CD8-positive, alpha-beta memory T cell (primary cell): ENCODE measurements at regions of chr7 and their contacts with region 1.

Region 1: DNA sequence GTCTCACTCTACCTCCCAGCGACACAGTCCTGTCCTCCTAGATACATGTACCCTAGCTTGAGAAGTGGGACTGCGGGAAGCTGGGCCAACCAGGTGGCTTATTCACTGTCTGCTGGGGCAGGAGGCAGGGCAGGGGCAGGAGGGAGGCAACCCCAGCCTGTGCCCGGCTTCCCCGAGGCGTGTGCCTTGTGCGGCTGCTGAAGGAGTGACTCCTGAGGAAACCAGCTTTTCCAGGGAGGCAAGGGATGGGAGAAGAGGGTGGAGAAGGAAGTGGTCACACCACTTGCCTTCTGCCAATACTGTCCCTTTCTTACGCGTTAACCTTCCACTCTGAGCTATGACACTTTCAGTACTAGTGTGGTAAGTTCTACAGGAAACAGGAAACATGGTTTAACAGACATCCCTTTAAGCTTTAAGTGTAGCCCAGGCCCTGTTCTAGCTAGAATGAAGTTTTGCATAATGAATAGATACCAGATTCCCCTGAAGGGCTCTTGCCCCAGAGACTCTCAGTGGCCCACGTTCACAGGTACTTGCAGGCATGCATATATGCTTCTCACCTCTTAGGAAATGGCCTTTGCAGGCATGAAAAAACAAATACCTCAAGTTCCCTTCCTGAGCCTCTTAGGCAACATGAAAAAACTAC is 40.6 kb downstream of the SYPL1 start:
- DNase-seq: peak in 3 of 5 donors; percentile 7 to 73 (median 61)
- H3K4me3 ChIP-seq: peak overlapping the region; percentile 53
- H3K4me3 Mint-ChIP-seq: peak overlapping the region; percentile 35 to 83 (median 81)
- H3K27ac ChIP-seq: peak overlapping the region; percentile 52
- H3K27ac Mint-ChIP-seq: peak overlapping the region; percentile 83 to 97 (median 90)
- H3K4me1 ChIP-seq: peaks cover 38% of the 10 kb centered on the region
- H3K4me1 Mint-ChIP-seq: peaks cover 38 to 46% (median 38%) of the 10 kb centered on the region in 3 donors
- H3K27me3 ChIP-seq: no peaks in the 10 kb centered on the region
- H3K27me3 Mint-ChIP-seq: no peaks in the 10 kb centered on the region

Region 2: GRCh38 chr7:105776058-105776751 is 295.3 kb before region 1 on chr7:
- CTCF ChIA-PET with region 1: no interaction called
- POLR2A ChIA-PET with region 1: no interaction called
- DNase-seq: no peak
- H3K4me3 ChIP-seq: no peak overlapping the region
- H3K4me3 Mint-ChIP-seq: no peak overlapping the region
- H3K27ac ChIP-seq: no peak overlapping the region
- H3K27ac Mint-ChIP-seq: no peak overlapping the region
- H3K4me1 ChIP-seq: no peaks in the 10 kb centered on the region
- H3K4me1 Mint-ChIP-seq: peaks cover 0 to 7% (median 2%) of the 10 kb centered on the region in 3 donors
- H3K27me3 ChIP-seq: no peaks in the 10 kb centered on the region
- H3K27me3 Mint-ChIP-seq: peaks cover 0 to 3% of the 10 kb centered on the region in 2 donors

Region 3: DNA sequence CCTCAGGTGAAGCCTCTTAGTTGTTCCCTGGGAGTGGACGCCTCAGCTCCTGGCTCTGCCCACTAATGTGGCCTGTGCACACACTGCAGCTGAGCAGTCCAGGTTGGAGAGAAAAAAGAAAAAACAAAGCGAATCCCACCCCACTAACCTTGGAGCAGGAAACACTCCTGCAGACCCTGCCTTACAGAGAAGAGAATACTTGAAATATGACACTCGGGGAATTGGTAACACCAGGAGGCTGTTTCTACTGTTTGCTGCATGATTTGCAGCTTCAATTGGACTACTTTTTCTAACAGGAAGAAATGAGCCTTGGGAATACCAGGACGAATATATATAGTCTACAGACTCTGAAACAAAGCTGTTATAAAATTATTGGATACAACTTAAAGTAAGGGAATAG is 86.2 kb before region 1 on chr7:
- CTCF ChIA-PET with region 1: no interaction called
- POLR2A ChIA-PET with region 1: no interaction called
- DNase-seq: no peak
- H3K4me3 ChIP-seq: no peak overlapping the region
- H3K4me3 Mint-ChIP-seq: no peak overlapping the region
- H3K27ac ChIP-seq: no peak overlapping the region
- H3K27ac Mint-ChIP-seq: no peak overlapping the region
- H3K4me1 ChIP-seq: no peaks in the 10 kb centered on the region
- H3K4me1 Mint-ChIP-seq: no peaks in the 10 kb centered on the region
- H3K27me3 ChIP-seq: no peaks in the 10 kb centered on the region
- H3K27me3 Mint-ChIP-seq: peaks cover 6 to 16% of the 10 kb centered on the region in 2 donors

Region 4: GRCh38 chr7:106056513-106057203 is 14.8 kb before region 1 on chr7:
- CTCF ChIA-PET with region 1: interaction called, 16 read pairs
- POLR2A ChIA-PET with region 1: interaction called, 5 read pairs
- DNase-seq: peak; percentile 49 to 79 (median 59)
- H3K4me3 ChIP-seq: no peak overlapping the region
- H3K4me3 Mint-ChIP-seq: peak overlapping the region in 1 of 7 donors; percentile 24
- H3K27ac ChIP-seq: no peak overlapping the region
- H3K27ac Mint-ChIP-seq: peak overlapping the region in 1 of 8 donors; percentile 31
- H3K4me1 ChIP-seq: peaks cover 14% of the 10 kb centered on the region
- H3K4me1 Mint-ChIP-seq: peaks cover 18 to 22% (median 21%) of the 10 kb centered on the region in 3 donors
- H3K27me3 ChIP-seq: no peaks in the 10 kb centered on the region
- H3K27me3 Mint-ChIP-seq: no peaks in the 10 kb centered on the region

Region 5: GRCh38 chr7:106112117-106112971 is 40.9 kb after region 1 on chr7 and contains the start of gene SYPL1:
- CTCF ChIA-PET with region 1: no interaction called
- POLR2A ChIA-PET with region 1: interaction called, 28 read pairs
- DNase-seq: peak; percentile 91 to 96 (median 92)
- H3K4me3 ChIP-seq: peak within 1 kb of the TSS; percentile 71
- H3K4me3 Mint-ChIP-seq: peak within 1 kb of the TSS; percentile 78 to 92 (median 90)
- H3K27ac ChIP-seq: peak within 1 kb of the TSS; percentile 87
- H3K27ac Mint-ChIP-seq: peak within 1 kb of the TSS; percentile 88 to 97 (median 95)
- H3K4me1 ChIP-seq: peaks cover 73% of the 10 kb centered on the region
- H3K4me1 Mint-ChIP-seq: peaks cover 53 to 73% (median 62%) of the 10 kb centered on the region in 3 donors
- H3K27me3 ChIP-seq: no peaks in the 10 kb centered on the region
- H3K27me3 Mint-ChIP-seq: no peaks in the 10 kb centered on the region
- total RNA-seq, gene SYPL1: 33.1 to 33.7 TPM

Region 6: DNA sequence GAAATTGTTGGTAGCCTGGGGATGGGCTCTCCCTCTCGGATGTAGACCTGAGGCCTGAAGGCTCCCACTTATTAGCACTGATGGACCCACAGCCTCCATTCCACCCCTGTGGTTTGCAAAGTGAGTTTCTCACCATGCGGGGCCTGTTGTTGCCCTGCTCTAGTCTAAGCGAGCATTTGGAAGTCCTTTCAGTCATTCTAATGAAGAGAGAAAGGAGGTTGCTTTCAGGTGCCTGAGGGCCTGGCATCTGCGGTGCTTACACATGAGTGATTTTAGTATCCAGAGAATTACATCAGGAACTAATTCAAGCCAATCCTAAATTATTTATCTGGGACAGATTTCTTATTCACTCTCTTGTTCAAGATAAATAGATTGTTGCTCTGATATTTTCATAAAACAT is 151.7 kb after region 1 on chr7:
- CTCF ChIA-PET with region 1: no interaction called
- POLR2A ChIA-PET with region 1: no interaction called
- DNase-seq: no peak
- H3K4me3 ChIP-seq: no peak overlapping the region
- H3K4me3 Mint-ChIP-seq: no peak overlapping the region
- H3K27ac ChIP-seq: no peak overlapping the region
- H3K27ac Mint-ChIP-seq: no peak overlapping the region
- H3K4me1 ChIP-seq: no peaks in the 10 kb centered on the region
- H3K4me1 Mint-ChIP-seq: no peaks in the 10 kb centered on the region
- H3K27me3 ChIP-seq: no peaks in the 10 kb centered on the region
- H3K27me3 Mint-ChIP-seq: peaks cover 11 to 19% of the 10 kb centered on the region in 2 donors